ENCODE measurements at regions of chr4 and their contacts with region 1.

Region 1: GRCh38 chr4:55378617-55379463 is 16.9 kb upstream of the TMEM165 start:
- DNase-seq: peak; percentile 85
- H3K4me3 Mint-ChIP-seq: peak overlapping the region; percentile 56
- H3K27ac Mint-ChIP-seq: peak overlapping the region; percentile 81
- H3K4me1 Mint-ChIP-seq: peaks cover 8% of the 10 kb centered on the region
- H3K27me3 Mint-ChIP-seq: no peaks in the 10 kb centered on the region
- CTCF ChIP-seq: no peak

Region 2: DNA sequence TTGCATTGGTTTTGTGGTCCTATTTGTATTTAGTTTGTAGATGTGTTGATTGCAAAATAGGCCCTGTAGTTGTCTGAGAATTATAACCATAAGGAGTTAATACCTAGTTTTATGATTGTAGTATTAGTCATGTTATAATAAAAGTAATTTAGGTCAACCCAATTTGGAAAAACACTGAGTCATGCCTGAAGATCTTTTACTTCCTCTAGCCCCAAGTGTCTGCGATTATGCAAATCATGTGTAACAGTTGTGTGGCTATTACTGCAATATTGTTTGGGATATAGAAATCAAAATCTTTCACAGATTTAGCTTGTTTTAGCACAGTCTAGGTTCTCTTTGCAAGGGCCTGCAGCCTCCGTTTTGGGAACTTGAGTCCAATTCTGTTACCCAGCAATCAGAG is 20.2 kb before region 1 on chr4:
- CTCF ChIA-PET with region 1: no interaction called
- POLR2A ChIA-PET with region 1: interaction called, 27 read pairs
- intact Hi-C with region 1: no loop called
- DNase-seq: peak; percentile 94
- H3K4me3 Mint-ChIP-seq: no peak overlapping the region
- H3K27ac Mint-ChIP-seq: peak overlapping the region; percentile 76
- H3K4me1 Mint-ChIP-seq: peaks cover 35% of the 10 kb centered on the region
- H3K27me3 Mint-ChIP-seq: no peaks in the 10 kb centered on the region
- CTCF ChIP-seq: no peak